Aorta (tissue), 5 donors: ENCODE measurements at regions of chr12 and their contacts with region 1.

Region 1: DNA sequence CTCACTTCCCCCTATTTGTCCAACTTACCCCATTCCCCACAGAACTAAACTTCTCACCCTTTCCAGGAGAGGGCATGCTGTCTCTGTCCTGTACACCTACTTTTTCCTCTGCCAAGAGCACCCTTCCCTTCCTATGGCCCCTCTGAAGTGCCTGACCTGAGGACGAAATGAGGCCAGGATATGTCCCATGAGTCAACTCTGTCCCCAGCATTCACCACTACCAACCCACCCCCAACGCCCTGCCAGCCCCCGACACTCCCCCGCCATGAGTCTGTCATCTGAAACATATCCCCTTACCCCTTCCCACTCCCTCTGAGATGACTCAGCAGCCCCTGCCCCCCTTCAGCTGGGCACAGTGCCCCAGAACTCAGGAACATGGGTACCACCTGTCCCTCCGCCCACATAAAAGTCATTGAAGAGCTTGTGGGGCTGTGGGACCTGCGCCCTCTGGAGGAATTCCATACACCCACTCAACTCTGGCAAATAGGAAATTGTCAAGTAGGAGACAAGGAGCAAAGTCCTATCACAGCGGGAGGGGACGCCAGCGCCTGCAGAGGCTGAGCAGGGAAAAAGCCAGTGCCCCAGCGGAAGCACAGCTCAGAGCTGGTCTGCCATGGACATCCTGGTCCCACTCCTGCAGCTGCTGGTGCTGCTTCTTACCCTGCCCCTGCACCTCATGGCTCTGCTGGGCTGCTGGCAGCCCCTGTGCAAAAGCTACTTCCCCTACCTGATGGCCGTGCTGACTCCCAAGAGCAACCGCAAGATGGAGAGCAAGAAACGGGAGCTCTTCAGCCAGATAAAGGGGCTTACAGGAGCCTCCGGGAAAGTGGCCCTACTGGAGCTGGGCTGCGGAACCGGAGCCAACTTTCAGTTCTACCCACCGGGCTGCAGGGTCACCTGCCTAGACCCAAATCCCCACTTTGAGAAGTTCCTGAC is 26.3 kb downstream of the ITGA7 start:
- DNase-seq: peak; percentile 78 to 84
- ATAC-seq: peak; percentile 70
- H3K4me3 ChIP-seq: no peak overlapping the region
- H3K27ac ChIP-seq: no peak overlapping the region
- H3K4me1 ChIP-seq: no peaks in the 10 kb centered on the region
- H3K27me3 ChIP-seq: no peaks in the 10 kb centered on the region

Region 2: DNA sequence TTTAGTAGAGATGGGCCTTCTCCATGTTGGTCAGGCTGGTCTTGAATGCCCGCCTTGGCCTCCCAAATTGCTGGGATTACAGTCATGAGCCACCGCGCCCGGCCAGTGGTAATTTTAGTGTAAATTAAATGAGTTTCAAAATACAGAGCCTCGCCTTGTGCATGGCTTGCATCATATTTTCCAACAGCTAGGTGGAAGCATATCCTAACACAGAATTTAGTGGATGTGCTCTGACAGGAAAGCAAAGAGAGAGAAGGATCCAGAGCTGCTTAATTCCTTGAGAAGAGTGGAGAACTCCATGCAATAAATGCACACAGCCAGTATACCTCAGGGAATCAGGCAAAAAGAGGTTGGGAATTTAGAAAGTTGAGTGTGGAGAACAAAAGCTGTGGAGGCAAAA is 235.1 kb before region 1 on chr12:
- intact Hi-C with region 1: no loop called
- DNase-seq: no peak
- ATAC-seq: no peak
- H3K4me3 ChIP-seq: no peak overlapping the region
- H3K27ac ChIP-seq: no peak overlapping the region
- H3K4me1 ChIP-seq: no peaks in the 10 kb centered on the region
- H3K27me3 ChIP-seq: no peaks in the 10 kb centered on the region

Region 3: GRCh38 chr12:55707841-55708694 is 26.7 kb after region 1 on chr12 and contains the start of gene ITGA7:
- intact Hi-C with region 1: loop called in 1 of 2 experiments (anchors 2 kb)
- DNase-seq: peak; percentile 90 to 98
- ATAC-seq: peak; percentile 83
- H3K4me3 ChIP-seq: peak within 1 kb of the TSS; percentile 54 to 84
- H3K27ac ChIP-seq: peak within 1 kb of the TSS; percentile 73 to 86
- H3K4me1 ChIP-seq: peaks cover 0 to 7% of the 10 kb centered on the region in 2 donors
- H3K27me3 ChIP-seq: no peaks in the 10 kb centered on the region
- total RNA-seq, gene ITGA7: 463 to 747 TPM

Region 4: DNA sequence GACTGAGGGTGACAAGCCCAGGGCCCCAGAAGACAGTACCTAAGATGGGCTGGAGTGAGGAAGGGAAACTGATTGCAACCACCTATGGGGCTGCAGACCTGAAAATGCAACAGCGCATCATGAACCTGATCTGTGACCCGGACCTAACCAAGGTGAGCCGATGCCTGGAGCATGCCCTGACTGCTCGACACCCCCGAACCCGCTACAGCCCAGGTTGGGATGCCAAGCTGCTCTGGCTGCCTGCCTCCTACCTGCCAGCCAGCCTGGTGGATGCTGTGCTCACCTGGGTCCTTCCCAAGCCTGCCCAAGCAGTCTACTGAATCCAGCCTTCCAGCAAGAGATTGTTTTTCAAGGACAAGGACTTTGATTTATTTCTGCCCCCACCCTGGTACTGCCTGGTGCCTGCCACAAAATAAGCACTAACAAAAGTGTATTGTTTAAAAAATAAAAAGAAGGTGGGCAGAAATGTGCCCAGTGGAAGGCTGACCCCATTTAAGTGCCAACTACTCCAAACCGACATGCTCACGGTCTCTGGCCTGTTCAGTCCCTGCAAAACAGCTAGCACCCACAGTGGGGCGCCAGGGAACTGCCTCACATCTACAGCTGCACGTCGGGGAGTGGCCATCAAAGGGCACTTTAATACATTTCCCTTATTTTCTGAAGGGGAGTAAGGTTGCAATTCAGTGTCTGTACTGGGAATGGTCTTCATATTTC is 43.0 kb after region 1 on chr12:
- intact Hi-C with region 1: loop called in 1 of 2 experiments (anchors 2 kb)
- DNase-seq: peak; percentile 76 to 87
- ATAC-seq: no peak
- H3K4me3 ChIP-seq: no peak overlapping the region
- H3K27ac ChIP-seq: no peak overlapping the region
- H3K4me1 ChIP-seq: no peaks in the 10 kb centered on the region
- H3K27me3 ChIP-seq: no peaks in the 10 kb centered on the region

Region 5: GRCh38 chr12:56046027-56046780 is 364.8 kb after region 1 on chr12:
- intact Hi-C with region 1: no loop called
- DNase-seq: peak in 1 of 2 donors; percentile 5
- ATAC-seq: no peak
- H3K4me3 ChIP-seq: no peak overlapping the region
- H3K27ac ChIP-seq: no peak overlapping the region
- H3K4me1 ChIP-seq: peaks cover 2 to 3% of the 10 kb centered on the region in 2 donors
- H3K27me3 ChIP-seq: no peaks in the 10 kb centered on the region

Region 6: DNA sequence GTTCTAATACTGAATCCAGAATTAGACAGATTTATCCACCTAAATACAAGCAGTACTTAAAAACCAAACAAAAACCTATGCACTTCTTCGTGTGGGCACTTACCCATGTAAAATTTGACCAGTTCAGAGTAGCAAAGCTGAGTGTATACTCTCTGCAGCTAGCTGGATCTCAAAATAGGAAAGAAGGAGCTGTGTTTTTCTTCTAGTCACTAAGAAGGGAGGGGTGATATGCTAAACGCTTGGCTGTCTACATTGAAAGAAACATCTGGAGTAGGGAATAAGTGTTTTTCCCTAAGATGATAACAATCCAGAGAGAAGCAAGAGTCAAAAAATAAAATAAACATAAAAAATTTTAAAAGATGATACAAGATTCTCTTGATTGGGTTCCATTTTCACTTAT is 860.2 kb after region 1 on chr12:
- intact Hi-C with region 1: no loop called
- DNase-seq: no peak
- ATAC-seq: no peak
- H3K4me3 ChIP-seq: no peak overlapping the region
- H3K27ac ChIP-seq: no peak overlapping the region
- H3K4me1 ChIP-seq: no peaks in the 10 kb centered on the region
- H3K27me3 ChIP-seq: no peaks in the 10 kb centered on the region